Vagina (tissue), 2 donors: ENCODE measurements at regions of chr3 and their contacts with region 1.

Region 1: DNA sequence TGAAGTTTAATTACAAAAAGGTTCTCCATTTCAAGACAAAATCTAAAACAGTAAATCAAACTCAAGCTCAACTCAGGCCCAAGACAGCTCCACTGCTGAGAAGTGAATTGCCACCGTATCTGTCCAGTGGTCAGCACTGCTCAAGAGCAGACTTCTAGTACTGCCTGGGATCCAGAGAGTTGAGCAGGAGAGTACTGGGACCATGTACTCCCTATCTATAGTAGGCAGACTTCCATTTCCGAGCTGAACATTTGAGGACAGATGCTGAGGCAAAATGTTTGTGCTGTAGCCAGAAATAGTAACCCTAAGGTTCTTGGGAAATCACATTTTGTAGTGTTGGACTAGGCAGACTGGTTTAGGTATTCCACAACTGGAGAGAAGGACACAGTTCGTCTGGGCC is 44.1 kb downstream of the MRPL3 start:
- DNase-seq: no peak
- H3K4me3 ChIP-seq: no peak overlapping the region
- H3K27ac ChIP-seq: no peak overlapping the region
- H3K4me1 ChIP-seq: no peaks in the 10 kb centered on the region
- H3K27me3 ChIP-seq: no peaks in the 10 kb centered on the region
- CTCF ChIP-seq: no peak
- POLR2A ChIP-seq: no peak

Region 2: GRCh38 chr3:132486086-132486485 is 1027.4 kb after region 1 on chr3:
- intact Hi-C with region 1: loop called (anchors 10 kb)
- DNase-seq: no peak
- H3K4me3 ChIP-seq: no peak overlapping the region
- H3K27ac ChIP-seq: no peak overlapping the region
- H3K4me1 ChIP-seq: no peaks in the 10 kb centered on the region
- H3K27me3 ChIP-seq: no peaks in the 10 kb centered on the region
- CTCF ChIP-seq: no peak
- POLR2A ChIP-seq: no peak